Adrenal gland (tissue), 19 donors: ENCODE measurements at regions of chr11 and their contacts with region 1.

Region 1: GRCh38 chr11:119144825-119145486 is 3.9 kb upstream of the ABCG4 start:
- DNase-seq: peak; percentile 54 to 83 (median 65)
- H3K4me3 ChIP-seq: no peak overlapping the region
- H3K27ac ChIP-seq: no peak overlapping the region
- H3K4me1 ChIP-seq: peaks cover 11 to 13% of the 10 kb centered on the region in 2 donors
- H3K27me3 ChIP-seq: no peaks in the 10 kb centered on the region
- CTCF ChIP-seq: peak; percentile 39 to 73 (median 60)
- POLR2A ChIP-seq: no peak

Region 2: DNA sequence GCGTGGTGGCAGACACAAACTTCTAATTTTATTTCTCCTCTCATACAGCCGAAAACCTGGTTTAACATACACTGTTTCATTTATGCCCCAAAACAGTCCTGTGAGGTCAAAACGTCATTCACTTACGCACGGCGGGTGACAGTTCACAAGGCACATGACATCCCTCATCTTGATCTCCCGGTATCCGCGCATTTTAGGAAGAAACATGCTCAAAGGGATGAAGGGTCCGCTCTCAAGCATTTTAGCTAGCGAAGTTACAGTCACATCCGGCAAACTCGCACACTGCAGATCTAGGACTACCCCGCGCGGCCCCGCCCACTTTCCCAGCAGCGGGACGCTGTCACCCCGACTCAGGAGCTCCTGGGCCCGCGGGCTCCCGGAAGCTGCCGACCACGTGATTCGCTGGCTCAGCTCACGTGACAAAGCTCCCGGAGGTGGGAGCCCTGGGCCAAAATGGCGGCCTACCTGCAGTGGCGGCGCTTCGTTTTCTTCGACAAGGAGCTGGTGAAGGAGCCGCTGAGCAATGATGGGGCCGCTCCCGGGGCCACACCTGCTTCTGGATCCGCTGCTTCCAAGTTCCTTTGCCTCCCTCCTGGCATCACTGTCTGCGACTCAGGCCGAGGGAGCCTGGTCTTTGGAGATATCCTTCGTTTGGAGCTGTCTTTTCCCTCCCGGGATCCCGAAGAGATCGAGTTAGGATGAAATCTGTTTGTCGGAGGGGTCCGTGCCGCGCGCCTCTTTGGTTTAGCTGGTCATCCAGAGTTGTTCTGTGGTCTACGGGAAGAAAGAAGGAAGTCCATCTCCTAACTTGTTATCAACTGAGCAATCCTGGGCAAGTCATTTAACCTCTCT is 77.4 kb before region 1 on chr11 and contains the start of gene VPS11:
- intact Hi-C with region 1: no loop called
- DNase-seq: peak; percentile 96 to 99 (median 98)
- H3K4me3 ChIP-seq: peak within 1 kb of the TSS; percentile 19 to 99 (median 77)
- H3K27ac ChIP-seq: peak within 1 kb of the TSS; percentile 81 to 91 (median 90)
- H3K4me1 ChIP-seq: peaks cover 6 to 13% of the 10 kb centered on the region in 2 donors
- H3K27me3 ChIP-seq: no peaks in the 10 kb centered on the region
- CTCF ChIP-seq: no peak
- POLR2A ChIP-seq: peak; percentile 40 to 87
- total RNA-seq, gene VPS11: 32.8 to 65.1 (median 55.2) TPM

Region 3: GRCh38 chr11:119084663-119085436 is 60.1 kb before region 1 on chr11 and contains the start of gene HMBS:
- intact Hi-C with region 1: no loop called
- DNase-seq: peak; percentile 89 to 97 (median 95)
- H3K4me3 ChIP-seq: peak within 1 kb of the TSS in 3 of 4 donors; percentile 75 to 84 (median 76)
- H3K27ac ChIP-seq: peak within 1 kb of the TSS; percentile 79 to 98 (median 84)
- H3K4me1 ChIP-seq: peaks cover 6 to 14% of the 10 kb centered on the region in 2 donors
- H3K27me3 ChIP-seq: no peaks in the 10 kb centered on the region
- CTCF ChIP-seq: no peak
- POLR2A ChIP-seq: peak in 1 of 2 donors; percentile 69
- total RNA-seq, gene HMBS: 10.9 to 37.2 (median 28.6) TPM

Region 4: DNA sequence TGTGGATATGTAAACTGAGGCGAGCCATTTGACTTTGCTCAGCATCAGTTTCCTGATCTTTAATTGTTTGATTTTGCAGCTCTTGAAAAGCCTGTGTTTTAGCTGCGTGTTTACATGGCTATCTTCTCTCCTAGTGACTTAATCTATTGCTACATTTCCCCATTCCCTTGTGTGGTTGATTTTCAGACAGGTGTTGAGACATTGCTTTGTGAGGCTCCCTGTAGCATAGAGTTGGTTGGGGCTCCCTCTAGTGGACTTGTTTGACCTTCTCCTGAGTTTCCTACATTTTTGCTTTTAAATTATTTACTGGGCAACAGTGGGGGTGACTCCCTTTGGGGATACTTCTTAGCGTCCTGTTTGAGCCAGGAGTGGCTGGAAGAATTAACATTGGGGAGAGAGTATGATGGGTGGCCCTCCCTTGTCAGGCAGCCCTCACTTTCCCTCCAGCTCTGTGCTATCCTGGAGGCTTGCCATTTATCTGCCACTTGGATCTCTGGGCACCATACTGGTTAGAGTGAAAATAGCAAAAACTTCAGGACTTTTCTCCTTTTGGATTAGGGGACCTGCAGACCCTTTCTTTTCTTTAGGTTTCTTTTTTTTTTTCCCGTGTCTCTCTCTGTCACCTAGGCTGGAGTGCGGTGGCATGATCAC is 52.0 kb after region 1 on chr11:
- intact Hi-C with region 1: loop called in 1 of 2 experiments (anchors 10 kb)
- DNase-seq: peak; percentile 67 to 87 (median 77)
- H3K4me3 ChIP-seq: no peak overlapping the region
- H3K27ac ChIP-seq: no peak overlapping the region
- H3K4me1 ChIP-seq: no peaks in the 10 kb centered on the region
- H3K27me3 ChIP-seq: no peaks in the 10 kb centered on the region
- CTCF ChIP-seq: peak; percentile 72 to 87 (median 82)
- POLR2A ChIP-seq: no peak